Keratinocyte (primary cell): ENCODE measurements at regions of chr6 and their contacts with region 1.

Region 1: DNA sequence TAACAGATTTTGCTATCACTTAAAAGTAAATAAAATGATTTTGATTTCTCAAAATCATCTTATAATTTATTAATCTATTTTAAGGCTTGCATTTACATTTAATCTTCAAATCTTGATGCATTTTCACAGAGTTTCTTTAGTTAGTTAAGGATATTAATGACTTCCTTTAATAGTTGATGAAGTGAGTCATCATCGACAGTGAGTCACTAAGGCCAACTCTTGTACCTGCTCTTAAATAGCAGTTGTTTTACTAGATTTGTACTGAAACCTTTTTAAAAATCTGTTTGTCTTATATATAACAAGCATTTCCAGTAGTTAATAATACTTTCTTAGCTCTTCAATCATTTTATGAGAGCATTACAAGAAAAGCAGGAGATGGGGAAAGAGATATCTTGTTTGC is 191.7 kb downstream of the ESR1 start:
- DNase-seq: no peak
- H3K4me3 ChIP-seq: no peak overlapping the region
- H3K27ac ChIP-seq: no peak overlapping the region
- H3K4me1 ChIP-seq: peaks cover 12% of the 10 kb centered on the region
- H3K27me3 ChIP-seq: no peaks in the 10 kb centered on the region
- CTCF ChIP-seq: no peak

Region 2: DNA sequence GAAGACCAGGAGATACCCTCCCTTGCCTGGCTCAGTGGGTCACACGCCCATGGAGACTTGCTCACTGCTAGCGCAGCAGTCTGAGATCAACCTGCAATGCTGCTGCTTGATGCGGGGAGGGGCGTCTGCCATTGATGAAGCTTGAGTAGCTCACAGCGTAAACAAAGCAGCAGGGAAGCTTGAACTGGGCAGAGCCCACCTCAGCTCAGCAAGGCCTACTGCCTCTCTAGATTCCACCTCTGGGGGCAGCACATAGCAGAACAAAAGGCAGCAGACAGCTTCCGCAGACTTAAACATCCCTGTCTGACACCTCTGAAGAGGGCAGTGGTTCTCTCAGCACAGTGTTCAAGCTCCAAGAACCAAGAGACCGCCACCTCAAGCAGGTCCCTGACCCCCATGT is 79.6 kb after region 1 on chr6:
- dilution Hi-C with region 1: loop called (anchors 10 kb)
- DNase-seq: no peak
- H3K4me3 ChIP-seq: no peak overlapping the region
- H3K27ac ChIP-seq: no peak overlapping the region
- H3K4me1 ChIP-seq: no peaks in the 10 kb centered on the region
- H3K27me3 ChIP-seq: no peaks in the 10 kb centered on the region
- CTCF ChIP-seq: no peak